ENCODE measurements at regions of chr3 and their contacts with region 1.

Region 1: DNA sequence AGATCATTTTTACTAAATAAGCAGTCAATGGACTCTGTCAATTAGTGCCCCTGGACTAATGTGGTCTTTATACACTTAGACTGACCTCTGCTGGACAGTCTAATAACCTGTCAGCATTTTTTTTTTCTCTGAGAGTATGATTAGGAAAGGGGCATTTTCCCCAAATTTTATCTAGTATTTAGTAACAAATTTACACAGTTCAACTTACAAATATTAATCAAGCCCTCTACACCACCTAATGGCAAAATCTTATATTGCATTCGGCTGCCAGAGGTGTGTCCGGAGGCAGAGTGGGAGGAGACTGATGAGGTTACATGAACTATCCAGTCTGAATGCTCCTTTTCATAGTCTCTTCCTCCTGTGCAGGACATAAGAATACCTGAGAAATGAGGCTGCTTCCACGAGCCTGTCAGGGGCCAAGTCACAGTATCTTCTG is 36.0 kb upstream of the COLQ start:
- DNase-seq: no peak
- ATAC-seq: peak; percentile 71 to 75 (median 73)
- H3K4me3 ChIP-seq: no peak overlapping the region
- H3K27ac ChIP-seq: no peak overlapping the region
- H3K4me1 ChIP-seq: no peaks in the 10 kb centered on the region
- H3K27me3 ChIP-seq: no peaks in the 10 kb centered on the region
- CTCF ChIP-seq: peak; percentile 71

Region 2: GRCh38 chr3:15268033-15268631 is 289.4 kb before region 1 on chr3:
- intact Hi-C with region 1: loop called in 1 of 2 experiments (anchors 5 kb)
- DNase-seq: peak; percentile 88 to 91
- ATAC-seq: peak; percentile 80 to 91 (median 88)
- H3K4me3 ChIP-seq: peak overlapping the region; percentile 12
- H3K27ac ChIP-seq: peak overlapping the region; percentile 39
- H3K4me1 ChIP-seq: peaks cover 29% of the 10 kb centered on the region
- H3K27me3 ChIP-seq: no peaks in the 10 kb centered on the region
- CTCF ChIP-seq: peak; percentile 96

Region 3: GRCh38 chr3:15427182-15427880 is 130.2 kb before region 1 on chr3 and contains the starts of genes EAF1 and METTL6:
- intact Hi-C with region 1: loop called (anchors 2 to 5 kb)
- DNase-seq: peak; percentile 87 to 91
- ATAC-seq: peak; percentile 91 to 96 (median 94)
- H3K4me3 ChIP-seq: peak within 1 kb of the TSS; percentile 80
- H3K27ac ChIP-seq: peak within 1 kb of the TSS; percentile 86
- H3K4me1 ChIP-seq: peaks cover 31% of the 10 kb centered on the region
- H3K27me3 ChIP-seq: no peaks in the 10 kb centered on the region
- CTCF ChIP-seq: peak; percentile 14
- total RNA-seq, gene EAF1: 9.3 to 16.0 (median 9.8) TPM
- total RNA-seq, gene METTL6: 7.5 to 8.3 (median 8.1) TPM

Region 4: DNA sequence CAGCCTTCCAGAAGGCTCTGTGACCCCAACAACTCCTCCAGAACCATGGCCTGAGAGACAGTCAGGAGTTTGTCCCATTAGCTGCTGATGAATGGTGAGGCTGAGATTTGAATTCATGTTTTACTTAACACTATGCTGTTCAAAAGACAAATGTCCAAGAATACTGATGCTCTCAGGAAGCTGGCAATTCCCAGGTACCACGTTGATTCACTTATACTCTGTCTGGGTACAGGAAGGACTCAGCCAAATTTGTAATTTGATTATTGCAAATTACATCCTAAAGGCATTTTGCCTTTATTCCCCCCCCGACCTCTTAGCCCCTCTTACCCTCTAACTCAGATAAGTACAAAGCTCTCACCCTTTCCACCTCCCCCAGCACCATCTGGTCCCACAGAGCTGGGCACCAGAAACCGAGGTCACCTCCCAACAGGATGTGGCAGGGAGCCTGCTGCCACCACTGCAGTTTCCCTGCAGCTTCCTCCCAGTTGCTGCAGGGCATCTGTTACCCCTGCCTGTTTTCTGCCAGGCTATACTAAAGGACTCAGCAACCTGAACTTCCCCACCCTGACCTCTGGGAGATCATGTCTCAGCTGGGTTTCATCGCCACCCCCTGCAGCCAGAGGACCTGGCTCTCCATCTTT is 96.5 kb before region 1 on chr3:
- intact Hi-C with region 1: loop called (anchors 10 kb)
- DNase-seq: no peak
- ATAC-seq: peak in 1 of 4 donors; percentile 17
- H3K4me3 ChIP-seq: no peak overlapping the region
- H3K27ac ChIP-seq: no peak overlapping the region
- H3K4me1 ChIP-seq: no peaks in the 10 kb centered on the region
- H3K27me3 ChIP-seq: no peaks in the 10 kb centered on the region
- CTCF ChIP-seq: no peak

Region 5: GRCh38 chr3:15476378-15476777 is 81.2 kb before region 1 on chr3:
- intact Hi-C with region 1: no loop called
- DNase-seq: no peak
- ATAC-seq: peak; percentile 21 to 60 (median 57)
- H3K4me3 ChIP-seq: no peak overlapping the region
- H3K27ac ChIP-seq: peak overlapping the region; percentile 57
- H3K4me1 ChIP-seq: peaks cover 12% of the 10 kb centered on the region
- H3K27me3 ChIP-seq: no peaks in the 10 kb centered on the region
- CTCF ChIP-seq: no peak

Region 6: GRCh38 chr3:15520185-15520584 is 37.3 kb before region 1 on chr3:
- intact Hi-C with region 1: loop called in 1 of 2 experiments (anchors 5 kb)
- DNase-seq: peak in 1 of 2 donors; percentile 60
- ATAC-seq: peak; percentile 80 to 89 (median 84)
- H3K4me3 ChIP-seq: peak overlapping the region; percentile 61
- H3K27ac ChIP-seq: peak overlapping the region; percentile 99
- H3K4me1 ChIP-seq: peaks cover 66% of the 10 kb centered on the region
- H3K27me3 ChIP-seq: no peaks in the 10 kb centered on the region
- CTCF ChIP-seq: no peak